ENCODE measurements at regions of chr10 and their contacts with region 1.

Region 1: GRCh38 chr10:88932539-88933256 is 19.9 kb downstream of the ACTA2 start:
- DNase-seq: peak; percentile 64
- ATAC-seq: peak; percentile 70
- H3K4me3 Mint-ChIP-seq: no peak overlapping the region
- H3K27ac Mint-ChIP-seq: peak overlapping the region; percentile 12
- H3K4me1 Mint-ChIP-seq: peaks cover 26% of the 10 kb centered on the region
- H3K27me3 Mint-ChIP-seq: no peaks in the 10 kb centered on the region

Region 2: DNA sequence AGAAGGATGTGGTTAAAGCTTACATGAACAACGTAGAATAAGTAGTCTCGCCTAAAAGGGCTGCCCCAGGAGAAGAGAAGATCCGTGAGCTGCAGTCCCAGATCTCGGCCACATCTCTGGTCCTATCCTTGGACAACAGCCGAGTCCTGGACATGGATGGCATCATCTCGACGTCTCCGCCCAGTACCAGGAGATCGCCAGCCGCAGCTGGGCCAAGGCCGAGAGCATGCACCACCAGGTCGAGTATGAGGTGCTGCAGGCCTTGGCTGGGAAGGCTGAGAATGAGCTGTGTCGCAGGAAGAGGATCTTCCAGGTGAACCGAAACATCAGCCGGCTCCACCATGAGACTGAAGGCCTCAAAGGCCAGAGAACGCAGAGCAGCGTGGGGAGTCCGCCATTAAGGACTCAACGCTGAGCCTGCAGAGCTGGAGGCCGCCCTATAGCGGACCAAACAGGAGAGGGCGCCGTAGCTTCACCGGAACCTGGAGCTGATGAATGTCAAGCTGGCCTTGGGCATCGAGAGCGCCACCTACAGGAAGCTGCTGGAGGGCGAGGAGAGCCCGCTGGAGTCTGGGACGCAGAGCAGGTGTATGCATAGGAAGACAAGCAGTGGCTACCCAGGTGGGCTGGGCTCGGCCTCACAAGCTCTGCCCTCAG is 204.5 kb before region 1 on chr10:
- CTCF ChIA-PET with region 1: interaction called, 20 read pairs
- POLR2A ChIA-PET with region 1: no interaction called
- DNase-seq: peak; percentile 52
- ATAC-seq: no peak
- H3K4me3 Mint-ChIP-seq: no peak overlapping the region
- H3K27ac Mint-ChIP-seq: no peak overlapping the region
- H3K4me1 Mint-ChIP-seq: peaks cover 5% of the 10 kb centered on the region
- H3K27me3 Mint-ChIP-seq: peaks cover 7% of the 10 kb centered on the region

Region 3: DNA sequence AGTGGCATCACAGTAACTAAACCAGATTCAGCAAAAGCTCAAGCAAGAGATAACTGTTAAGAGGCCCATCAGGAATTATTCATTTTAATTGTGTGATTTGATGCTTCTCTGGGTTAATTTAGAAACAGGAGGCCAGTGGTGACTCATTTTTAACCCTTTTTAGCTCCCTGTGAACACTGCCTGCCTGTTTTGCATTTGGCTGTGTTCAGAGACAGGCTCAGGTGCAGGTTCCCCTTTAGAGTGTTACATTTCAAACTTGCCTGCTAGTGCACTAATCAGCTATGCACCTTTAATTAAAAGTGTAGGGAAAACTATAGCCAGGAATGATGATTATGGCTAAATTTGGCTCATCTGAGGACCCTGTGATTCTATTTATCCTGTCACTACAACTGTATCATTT is 46.1 kb before region 1 on chr10:
- CTCF ChIA-PET with region 1: interaction called, 30 read pairs
- POLR2A ChIA-PET with region 1: no interaction called
- DNase-seq: no peak
- ATAC-seq: no peak
- H3K4me3 Mint-ChIP-seq: no peak overlapping the region
- H3K27ac Mint-ChIP-seq: no peak overlapping the region
- H3K4me1 Mint-ChIP-seq: peaks cover 88% of the 10 kb centered on the region
- H3K27me3 Mint-ChIP-seq: no peaks in the 10 kb centered on the region

Region 4: GRCh38 chr10:88958721-88959120 is 26.0 kb after region 1 on chr10:
- CTCF ChIA-PET with region 1: interaction called, 17 read pairs
- POLR2A ChIA-PET with region 1: no interaction called
- DNase-seq: no peak
- ATAC-seq: no peak
- H3K4me3 Mint-ChIP-seq: no peak overlapping the region
- H3K27ac Mint-ChIP-seq: no peak overlapping the region
- H3K4me1 Mint-ChIP-seq: peaks cover 33% of the 10 kb centered on the region
- H3K27me3 Mint-ChIP-seq: no peaks in the 10 kb centered on the region

Region 5: DNA sequence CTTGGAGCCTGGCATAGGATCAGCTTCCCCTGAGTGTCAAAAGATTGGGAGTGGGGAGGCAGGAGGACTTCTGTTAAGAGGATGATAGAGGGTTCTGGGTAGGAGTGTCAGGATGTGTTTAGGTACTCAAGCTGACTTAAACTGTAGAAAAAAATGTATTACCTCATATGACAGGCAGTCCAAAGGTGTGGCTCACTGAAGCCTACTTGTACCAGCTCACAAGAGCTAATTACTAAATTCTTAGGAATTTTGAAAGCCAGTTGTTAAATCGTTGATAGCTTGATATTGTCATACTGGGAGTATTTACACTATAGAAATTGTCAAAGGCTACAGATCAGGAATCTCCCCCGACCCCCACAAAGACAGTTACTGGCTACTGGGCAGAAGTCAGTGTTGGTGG is 90.0 kb after region 1 on chr10:
- CTCF ChIA-PET with region 1: interaction called, 28 read pairs
- POLR2A ChIA-PET with region 1: no interaction called
- DNase-seq: no peak
- ATAC-seq: no peak
- H3K4me3 Mint-ChIP-seq: no peak overlapping the region
- H3K27ac Mint-ChIP-seq: no peak overlapping the region
- H3K4me1 Mint-ChIP-seq: no peaks in the 10 kb centered on the region
- H3K27me3 Mint-ChIP-seq: no peaks in the 10 kb centered on the region

Region 6: GRCh38 chr10:89217057-89217990 is 284.6 kb after region 1 on chr10:
- CTCF ChIA-PET with region 1: interaction called, 66 read pairs
- POLR2A ChIA-PET with region 1: interaction called, 3 read pairs
- DNase-seq: peak; percentile 81
- ATAC-seq: peak; percentile 55
- H3K4me3 Mint-ChIP-seq: no peak overlapping the region
- H3K27ac Mint-ChIP-seq: no peak overlapping the region
- H3K4me1 Mint-ChIP-seq: peaks cover 8% of the 10 kb centered on the region
- H3K27me3 Mint-ChIP-seq: peaks cover 2% of the 10 kb centered on the region